PC-3 (cell line): ENCODE measurements at regions of chr6 and their contacts with region 1.

Region 1: GRCh38 chr6:148947621-148948444 is 201.0 kb downstream of the UST start:
- DNase-seq: peak; percentile 86
- ATAC-seq: peak; percentile 88
- H3K4me3 ChIP-seq: no peak overlapping the region
- H3K27ac ChIP-seq: no peak overlapping the region
- H3K4me1 ChIP-seq: peaks cover 16% of the 10 kb centered on the region
- H3K27me3 ChIP-seq: no peaks in the 10 kb centered on the region
- CTCF ChIP-seq: peak; percentile 74

Region 2: GRCh38 chr6:148854096-148854495 is 93.7 kb before region 1 on chr6:
- CTCF ChIA-PET with region 1: no interaction called
- POLR2A ChIA-PET with region 1: no interaction called
- intact Hi-C with region 1: loop called (anchors 10 kb)
- DNase-seq: no peak
- ATAC-seq: no peak
- H3K4me3 ChIP-seq: no peak overlapping the region
- H3K27ac ChIP-seq: no peak overlapping the region
- H3K4me1 ChIP-seq: peaks cover 25% of the 10 kb centered on the region
- H3K27me3 ChIP-seq: no peaks in the 10 kb centered on the region
- CTCF ChIP-seq: no peak